ENCODE measurements at regions of chr6 and their contacts with region 1.

Region 1: DNA sequence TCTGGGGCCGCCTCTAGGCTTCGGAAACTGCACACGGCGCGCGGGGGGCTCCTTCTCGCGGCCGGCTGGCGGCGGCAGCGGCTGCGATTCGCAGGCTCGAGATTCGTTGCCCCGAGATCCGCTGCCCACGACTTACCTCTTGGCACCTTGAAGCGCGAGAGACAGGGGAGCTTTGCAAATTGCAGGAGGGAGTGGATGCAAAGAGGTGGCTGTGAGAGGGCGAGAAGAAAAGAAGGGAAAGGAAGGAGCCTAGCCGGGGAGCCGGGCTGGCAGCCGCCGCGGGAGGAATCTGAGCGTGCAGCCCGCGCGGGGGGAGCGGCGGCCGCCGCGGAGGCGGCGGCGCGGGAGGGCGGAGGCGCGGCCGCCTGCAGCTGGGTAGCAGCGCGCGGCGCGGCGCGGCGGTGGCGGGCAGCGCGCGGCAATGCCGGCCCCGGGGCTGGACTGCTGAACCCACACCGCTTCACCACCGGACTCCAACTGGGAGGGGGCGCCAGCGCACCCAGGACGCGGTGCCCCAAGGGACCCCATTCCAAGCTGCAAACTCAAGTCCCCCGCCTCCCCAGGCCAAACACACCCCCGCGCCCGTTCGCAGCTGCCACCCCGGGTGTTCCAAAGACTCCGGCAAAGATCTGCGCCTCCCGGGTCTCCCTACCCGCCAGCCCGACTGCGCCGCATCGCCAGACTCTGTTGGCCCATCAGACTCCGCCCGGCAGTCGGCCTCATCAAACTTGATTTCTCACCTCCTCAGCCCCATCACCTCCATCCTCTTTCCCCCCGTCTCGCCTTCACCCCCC is 44.2 kb upstream of the SUPT3H start:
- DNase-seq: no peak
- H3K27ac ChIP-seq: peak overlapping the region; percentile 78
- CTCF ChIP-seq: peak; percentile 58

Region 2: DNA sequence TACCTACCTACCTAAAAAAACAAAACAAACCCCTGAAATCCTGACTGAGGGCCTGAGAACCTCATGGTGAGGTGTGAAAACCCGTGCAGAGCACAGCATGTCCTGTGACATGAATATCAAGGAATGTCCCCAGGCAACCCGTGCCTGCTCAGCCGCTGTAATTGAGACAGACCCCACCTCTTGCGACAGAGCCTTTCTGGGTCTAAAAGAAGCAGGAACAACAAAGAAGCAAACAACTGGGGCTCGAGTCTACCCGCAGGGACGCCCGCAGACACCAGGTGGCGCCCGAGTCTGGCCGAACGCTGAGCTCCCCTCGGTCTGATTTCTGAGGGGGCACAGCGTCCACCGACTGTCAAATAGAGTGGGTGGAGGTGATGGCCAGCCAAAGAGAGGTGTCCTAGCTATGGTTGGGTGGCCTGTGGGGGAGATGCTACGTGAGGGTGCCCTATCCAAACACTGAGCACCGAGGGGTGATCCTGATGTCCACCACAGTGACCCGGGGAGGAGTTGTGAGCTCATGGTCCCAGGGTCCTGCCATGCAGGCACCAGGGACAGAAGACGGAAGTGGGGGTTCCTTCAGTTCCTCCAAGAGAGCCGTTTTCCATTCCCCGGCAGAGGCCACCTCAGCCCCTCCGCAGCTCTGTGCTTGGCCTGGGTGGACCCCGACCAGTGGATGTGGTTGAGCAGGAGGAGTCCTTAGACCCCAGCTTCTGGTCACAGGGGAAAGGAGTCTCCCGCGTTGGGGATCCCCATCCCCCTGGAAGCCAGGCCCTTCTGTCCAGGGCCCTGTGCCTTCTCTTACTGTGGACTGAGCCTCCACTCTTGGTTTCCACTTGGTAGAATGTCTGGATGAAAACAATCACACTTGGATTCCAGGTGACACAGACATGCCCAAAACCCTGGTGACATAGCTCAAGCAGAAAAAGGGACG is 766.2 kb before region 1 on chr6:
- CTCF ChIA-PET with region 1: interaction called, 10 read pairs
- POLR2A ChIA-PET with region 1: no interaction called
- DNase-seq: peak; percentile 52
- H3K27ac ChIP-seq: no peak overlapping the region
- CTCF ChIP-seq: peak; percentile 91

Region 3: GRCh38 chr6:45436544-45437438 is 14.9 kb after region 1 on chr6:
- CTCF ChIA-PET with region 1: no interaction called
- POLR2A ChIA-PET with region 1: no interaction called
- DNase-seq: no peak
- H3K27ac ChIP-seq: no peak overlapping the region
- CTCF ChIP-seq: no peak

Region 4: GRCh38 chr6:45454008-45454911 is 32.4 kb after region 1 on chr6:
- CTCF ChIA-PET with region 1: no interaction called
- POLR2A ChIA-PET with region 1: no interaction called
- DNase-seq: no peak
- H3K27ac ChIP-seq: no peak overlapping the region
- CTCF ChIP-seq: no peak

Region 5: GRCh38 chr6:45483021-45483420 is 61.1 kb after region 1 on chr6:
- CTCF ChIA-PET with region 1: no interaction called
- POLR2A ChIA-PET with region 1: no interaction called
- DNase-seq: no peak
- H3K27ac ChIP-seq: no peak overlapping the region
- CTCF ChIP-seq: no peak

Region 6: GRCh38 chr6:45714741-45715507 is 293.0 kb after region 1 on chr6:
- CTCF ChIA-PET with region 1: interaction called, 28 read pairs
- POLR2A ChIA-PET with region 1: no interaction called
- DNase-seq: peak; percentile 78
- H3K27ac ChIP-seq: no peak overlapping the region
- CTCF ChIP-seq: peak; percentile 89